Activated naive CD4-positive, alpha-beta T cell treated with anti-CD3 and anti-CD28 coated beads for 36 hours (primary cell): ENCODE measurements at regions of chr5 and their contacts with region 1.

Region 1: GRCh38 chr5:131394128-131394527 is 130.3 kb downstream of the CDC42SE2 start:
- DNase-seq: peak; percentile 72
- H3K4me3 Mint-ChIP-seq: peak overlapping the region; percentile 67
- H3K27ac Mint-ChIP-seq: peak overlapping the region; percentile 96
- H3K4me1 Mint-ChIP-seq: peaks cover 93% of the 10 kb centered on the region
- H3K27me3 Mint-ChIP-seq: no peaks in the 10 kb centered on the region

Region 2: GRCh38 chr5:131068893-131069643 is 325.1 kb before region 1 on chr5:
- CTCF ChIA-PET with region 1: no interaction called
- intact Hi-C with region 1: loop called (anchors 1 kb)
- DNase-seq: peak; percentile 87
- H3K4me3 Mint-ChIP-seq: no peak overlapping the region
- H3K27ac Mint-ChIP-seq: peak overlapping the region; percentile 94
- H3K4me1 Mint-ChIP-seq: peaks cover 55% of the 10 kb centered on the region
- H3K27me3 Mint-ChIP-seq: no peaks in the 10 kb centered on the region

Region 3: DNA sequence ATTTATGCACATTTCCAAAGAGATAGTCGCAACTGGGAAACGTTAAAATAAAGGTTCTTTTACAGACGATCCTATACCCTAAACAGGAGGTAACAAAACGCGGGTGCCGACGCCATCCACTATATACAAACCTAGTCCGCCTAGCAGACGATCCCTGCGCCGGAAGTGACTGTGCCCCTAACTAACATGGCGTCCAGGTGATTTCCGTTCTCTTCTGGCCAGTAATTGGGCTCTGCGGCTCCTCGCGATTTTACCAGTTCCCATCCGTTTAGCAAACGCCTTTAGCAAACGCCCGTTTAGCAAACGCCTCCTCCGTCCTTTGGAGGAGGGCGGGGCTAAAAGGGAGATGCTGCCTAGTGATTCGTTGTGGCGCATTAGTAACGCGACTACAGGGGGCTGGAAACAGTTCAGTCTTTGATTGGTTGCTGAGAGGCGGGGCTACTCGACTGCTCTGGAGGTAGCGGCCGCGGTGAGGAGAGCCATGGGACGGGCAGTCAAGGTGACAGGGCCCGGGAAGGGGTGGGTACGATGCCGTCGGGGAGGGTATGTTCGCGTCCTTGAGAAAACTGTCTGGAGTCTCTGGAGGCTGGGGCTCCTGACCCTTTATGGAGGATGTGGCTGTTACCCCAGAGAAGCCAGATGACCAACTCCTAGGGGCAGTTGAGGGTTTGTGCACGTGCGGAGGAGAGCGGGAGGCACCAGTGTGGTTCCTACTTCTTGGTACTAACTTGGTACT is 223.4 kb before region 1 on chr5 and contains the start of gene LYRM7:
- CTCF ChIA-PET with region 1: no interaction called
- intact Hi-C with region 1: loop called (anchors 1 kb)
- DNase-seq: peak; percentile 98
- H3K4me3 Mint-ChIP-seq: peak within 1 kb of the TSS; percentile 99
- H3K27ac Mint-ChIP-seq: peak within 1 kb of the TSS; percentile 92
- H3K4me1 Mint-ChIP-seq: peaks cover 44% of the 10 kb centered on the region
- H3K27me3 Mint-ChIP-seq: no peaks in the 10 kb centered on the region
- total RNA-seq, gene LYRM7: 14.6 to 15.0 TPM

Region 4: GRCh38 chr5:131357739-131358561 is 36.2 kb before region 1 on chr5:
- CTCF ChIA-PET with region 1: interaction called, 3 read pairs
- intact Hi-C with region 1: loop called (anchors 1 kb)
- DNase-seq: peak; percentile 67
- H3K4me3 Mint-ChIP-seq: peak overlapping the region; percentile 54
- H3K27ac Mint-ChIP-seq: peak overlapping the region; percentile 91
- H3K4me1 Mint-ChIP-seq: peaks cover 67% of the 10 kb centered on the region
- H3K27me3 Mint-ChIP-seq: no peaks in the 10 kb centered on the region

Region 5: GRCh38 chr5:131417240-131417869 is 23.2 kb after region 1 on chr5:
- CTCF ChIA-PET with region 1: interaction called, 3 read pairs
- intact Hi-C with region 1: loop called (anchors 1 kb)
- DNase-seq: peak; percentile 95
- H3K4me3 Mint-ChIP-seq: peak overlapping the region; percentile 34
- H3K27ac Mint-ChIP-seq: peak overlapping the region; percentile 81
- H3K4me1 Mint-ChIP-seq: peaks cover 41% of the 10 kb centered on the region
- H3K27me3 Mint-ChIP-seq: no peaks in the 10 kb centered on the region